Left ventricle myocardium superior (tissue), 1 donor: ENCODE measurements at regions of chr12 and their contacts with region 1.

Region 1: DNA sequence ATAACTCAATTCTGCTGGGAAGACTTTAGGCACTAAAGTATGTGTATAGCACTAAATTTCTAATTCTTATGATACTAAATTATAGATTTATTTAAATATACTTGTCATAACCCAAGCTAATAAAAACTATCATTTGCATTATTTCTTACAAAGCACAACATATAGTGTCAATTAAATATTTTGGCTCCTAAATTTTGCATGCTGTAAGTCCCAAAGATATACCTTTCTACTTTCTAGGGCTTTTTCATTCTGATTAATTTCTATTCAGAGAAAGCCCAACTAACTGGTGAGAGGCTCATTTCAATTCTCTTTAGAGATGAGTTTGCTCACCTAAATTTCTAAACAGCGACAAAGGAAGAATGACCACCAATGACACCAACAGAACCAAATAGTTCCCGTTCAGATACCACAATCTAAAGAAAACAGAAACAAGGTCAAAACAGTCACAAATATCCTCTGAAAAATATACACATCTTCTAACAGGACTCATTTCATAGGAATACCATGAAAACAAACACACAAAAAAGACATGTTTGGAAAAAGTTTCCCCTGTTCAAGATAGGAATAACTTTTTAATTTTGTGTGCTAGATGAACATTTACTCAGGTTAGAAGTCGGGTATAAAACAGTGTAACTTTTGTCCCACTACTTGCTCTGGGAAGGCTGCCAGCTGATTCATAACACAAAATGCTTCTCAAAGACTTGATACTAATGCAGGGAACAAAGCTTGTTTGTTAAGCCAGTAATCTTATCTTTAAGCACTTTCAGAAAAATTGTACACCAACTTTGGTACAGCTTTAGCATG is 7.6 kb downstream of the SLC38A2 start:
- DNase-seq: no peak
- ATAC-seq: peak; percentile 62

Region 2: DNA sequence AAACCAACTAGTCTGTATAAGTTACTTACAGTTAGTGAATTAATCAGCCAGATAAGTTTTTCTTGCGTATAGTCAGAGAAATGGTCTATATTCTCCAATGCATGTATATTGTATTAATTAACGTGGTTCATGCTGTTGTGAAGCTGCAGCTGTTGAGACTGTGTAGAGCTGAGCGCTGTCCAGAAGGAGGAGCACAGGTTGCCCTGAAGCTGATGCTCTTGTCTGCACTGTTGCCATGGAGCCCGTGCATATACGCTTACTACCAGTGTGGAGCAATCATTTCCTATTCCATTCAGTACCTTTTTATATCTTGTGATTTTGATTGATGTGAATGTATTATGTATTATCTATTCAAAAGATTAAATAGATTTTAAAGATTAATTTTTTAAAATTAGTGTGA is 709.8 kb before region 1 on chr12:
- intact Hi-C with region 1: no loop called
- DNase-seq: no peak
- ATAC-seq: peak; percentile 56

Region 3: DNA sequence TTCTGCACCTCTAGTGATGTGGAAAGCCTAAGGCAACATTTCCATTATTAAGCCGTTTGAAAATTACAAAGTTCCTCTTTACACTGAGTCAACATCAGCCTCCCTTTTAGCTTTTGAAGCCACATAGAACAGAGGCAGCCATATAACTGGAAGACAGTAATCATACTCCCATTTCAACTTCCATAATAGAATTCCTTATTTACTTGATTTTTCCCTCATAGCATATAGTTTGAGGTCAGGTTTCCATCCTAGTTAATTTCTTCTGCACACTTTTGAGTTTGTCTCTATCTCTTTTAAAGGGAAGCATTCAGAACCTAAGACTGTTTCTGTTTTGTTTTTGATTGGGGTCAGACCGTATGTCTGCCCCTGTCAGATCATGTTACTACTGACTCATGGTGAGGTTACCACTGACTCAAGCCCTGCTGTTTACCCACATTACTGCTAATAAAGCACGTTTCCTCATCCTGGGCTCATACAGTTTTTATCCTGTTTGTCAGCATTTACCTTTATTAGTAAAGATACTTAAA is 299.8 kb after region 1 on chr12:
- intact Hi-C with region 1: loop called (anchors 5 kb)
- DNase-seq: no peak
- ATAC-seq: no peak

Region 4: DNA sequence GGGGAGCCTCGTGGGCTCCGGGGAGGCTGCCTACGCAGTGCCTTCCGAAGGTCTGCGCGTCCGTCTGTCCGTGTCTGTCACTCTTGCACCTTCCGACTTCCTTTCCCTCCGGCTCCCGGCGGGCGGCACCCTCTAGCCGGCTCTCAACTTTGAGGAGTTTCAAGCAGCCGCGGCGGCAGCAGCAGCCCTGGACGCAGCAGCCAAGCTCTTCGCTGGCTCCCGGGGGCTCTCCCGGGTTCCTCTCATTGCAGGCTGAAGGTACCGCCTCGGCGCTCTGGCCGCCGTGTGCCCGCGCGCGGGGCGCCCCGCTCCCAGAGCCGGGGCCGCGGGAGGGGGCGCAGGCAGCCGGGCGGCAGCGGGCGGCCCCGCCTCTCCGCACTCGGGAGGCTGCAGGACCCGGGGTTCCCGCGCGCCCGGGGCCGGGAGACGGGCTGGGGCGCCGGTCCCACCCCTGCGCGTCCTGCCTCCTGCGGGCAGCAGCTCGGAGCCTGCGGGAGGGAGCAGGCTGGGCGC is 714.5 kb after region 1 on chr12 and contains the starts of genes AMIGO2 and PCED1B:
- intact Hi-C with region 1: no loop called
- DNase-seq: peak; percentile 86
- ATAC-seq: peak; percentile 82
- total RNA-seq, gene AMIGO2: 2.1 TPM
- total RNA-seq, gene PCED1B: 1.1 TPM